ENCODE measurements at regions of chr19 and their contacts with region 1.

Region 1: DNA sequence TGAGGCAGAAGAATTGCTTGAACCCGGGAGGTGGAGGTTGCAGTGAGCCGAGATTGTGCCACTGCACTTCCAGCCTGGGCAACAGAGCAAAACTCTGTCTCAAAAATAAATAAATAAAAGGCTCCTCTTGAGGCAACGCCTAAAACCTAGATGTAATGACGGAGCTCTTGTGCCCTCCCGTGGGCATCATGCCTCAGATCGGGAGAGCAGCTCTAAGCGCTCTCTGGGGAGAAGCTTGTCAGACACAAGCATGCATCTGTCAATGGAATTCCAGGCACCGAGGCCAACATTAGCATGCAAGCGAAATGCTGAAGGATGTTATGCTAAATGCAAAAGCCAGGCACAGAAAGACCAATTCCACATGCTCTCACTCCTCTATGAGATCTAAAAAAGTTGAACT is 45.6 kb upstream of the MRI1 start:
- H3K4me3 Mint-ChIP-seq: no peak overlapping the region
- H3K27ac Mint-ChIP-seq: no peak overlapping the region
- H3K4me1 Mint-ChIP-seq: peaks cover 6% of the 10 kb centered on the region
- H3K27me3 Mint-ChIP-seq: peaks cover 24% of the 10 kb centered on the region

Region 2: GRCh38 chr19:13597640-13598039 is 121.1 kb before region 1 on chr19:
- intact Hi-C with region 1: loop called (anchors 2 kb)
- H3K4me3 Mint-ChIP-seq: no peak overlapping the region
- H3K27ac Mint-ChIP-seq: no peak overlapping the region
- H3K4me1 Mint-ChIP-seq: no peaks in the 10 kb centered on the region
- H3K27me3 Mint-ChIP-seq: peaks cover 2% of the 10 kb centered on the region